ENCODE measurements at regions of chr1 and their contacts with region 1.

Region 1: DNA sequence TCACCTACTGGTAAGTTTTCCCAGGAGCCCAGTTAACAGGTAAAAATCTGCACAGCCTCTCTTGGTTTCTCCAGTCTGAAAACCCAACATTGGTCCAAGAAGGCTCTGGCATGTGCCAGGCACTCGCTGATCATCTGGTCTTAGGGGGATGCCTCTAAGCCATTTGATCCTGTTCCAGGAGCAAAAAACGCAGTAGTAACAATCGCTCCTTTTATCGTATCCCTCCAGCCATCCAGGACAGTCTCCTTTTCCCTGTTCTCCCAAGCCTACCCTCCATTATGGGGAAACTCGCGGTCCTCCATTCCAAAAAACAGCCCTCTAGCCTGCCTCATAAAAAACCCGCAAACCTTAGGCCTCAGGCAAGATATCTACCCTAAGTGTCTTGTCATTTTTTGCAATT is 56.2 kb downstream of the ODF2L start:
- DNase-seq: no peak
- H3K4me3 ChIP-seq: no peak overlapping the region
- H3K4me3 Mint-ChIP-seq: no peak overlapping the region
- H3K27ac Mint-ChIP-seq: no peak overlapping the region
- H3K4me1 ChIP-seq: no peaks in the 10 kb centered on the region
- H3K4me1 Mint-ChIP-seq: no peaks in the 10 kb centered on the region
- H3K27me3 ChIP-seq: no peaks in the 10 kb centered on the region
- H3K27me3 Mint-ChIP-seq: no peaks in the 10 kb centered on the region
- CTCF ChIP-seq: no peak

Region 2: GRCh38 chr1:86068271-86068721 is 271.6 kb before region 1 on chr1:
- CTCF ChIA-PET with region 1: no interaction called
- POLR2A ChIA-PET with region 1: no interaction called
- intact Hi-C with region 1: no loop called
- DNase-seq: no peak
- H3K4me3 ChIP-seq: no peak overlapping the region
- H3K4me3 Mint-ChIP-seq: no peak overlapping the region
- H3K27ac Mint-ChIP-seq: no peak overlapping the region
- H3K4me1 ChIP-seq: no peaks in the 10 kb centered on the region
- H3K4me1 Mint-ChIP-seq: no peaks in the 10 kb centered on the region
- H3K27me3 ChIP-seq: no peaks in the 10 kb centered on the region
- H3K27me3 Mint-ChIP-seq: no peaks in the 10 kb centered on the region
- CTCF ChIP-seq: no peak

Region 3: DNA sequence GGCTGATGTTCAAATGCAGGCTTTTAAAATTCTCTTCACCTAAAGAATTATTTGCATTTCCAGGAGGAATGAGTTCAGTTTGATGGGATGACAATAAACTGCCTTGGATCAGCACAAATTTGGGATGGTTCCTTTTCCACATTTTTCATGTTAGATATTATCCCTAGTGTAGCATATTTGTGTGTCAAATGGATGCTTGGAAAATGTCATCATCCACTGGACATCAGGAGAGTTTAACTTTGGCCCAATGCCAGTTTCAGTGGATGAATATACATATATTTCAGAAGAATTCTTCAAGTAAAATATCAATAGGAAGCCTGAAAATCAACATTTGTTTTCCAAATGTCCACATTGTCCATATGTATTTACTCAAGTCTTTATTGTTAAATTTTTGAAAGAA is 66.8 kb before region 1 on chr1:
- CTCF ChIA-PET with region 1: no interaction called
- POLR2A ChIA-PET with region 1: no interaction called
- intact Hi-C with region 1: loop called (anchors 2 kb)
- DNase-seq: no peak
- H3K4me3 ChIP-seq: no peak overlapping the region
- H3K4me3 Mint-ChIP-seq: no peak overlapping the region
- H3K27ac Mint-ChIP-seq: no peak overlapping the region
- H3K4me1 ChIP-seq: no peaks in the 10 kb centered on the region
- H3K4me1 Mint-ChIP-seq: no peaks in the 10 kb centered on the region
- H3K27me3 ChIP-seq: no peaks in the 10 kb centered on the region
- H3K27me3 Mint-ChIP-seq: peaks cover 5% of the 10 kb centered on the region
- CTCF ChIP-seq: no peak

Measured in Caco-2 (cell line).